ENCODE measurements at regions of chr2 and their contacts with region 1.

Region 1: GRCh38 chr2:26001743-26002351 is 19.6 kb upstream of the KIF3C start:
- DNase-seq: peak in 1 of 2 donors; percentile 85
- H3K4me3 ChIP-seq: peak overlapping the region in 1 of 2 donors; percentile 13
- H3K27ac ChIP-seq: peak overlapping the region; percentile 72 to 78
- H3K4me1 ChIP-seq: peaks cover 21 to 35% of the 10 kb centered on the region in 2 donors
- H3K27me3 ChIP-seq: no peaks in the 10 kb centered on the region
- CTCF ChIP-seq: no peak

Region 2: GRCh38 chr2:25960920-25961319 is 40.9 kb before region 1 on chr2:
- intact Hi-C with region 1: no loop called
- DNase-seq: no peak
- H3K4me3 ChIP-seq: no peak overlapping the region
- H3K27ac ChIP-seq: no peak overlapping the region
- H3K4me1 ChIP-seq: no peaks in the 10 kb centered on the region
- H3K27me3 ChIP-seq: no peaks in the 10 kb centered on the region
- CTCF ChIP-seq: no peak

Region 3: DNA sequence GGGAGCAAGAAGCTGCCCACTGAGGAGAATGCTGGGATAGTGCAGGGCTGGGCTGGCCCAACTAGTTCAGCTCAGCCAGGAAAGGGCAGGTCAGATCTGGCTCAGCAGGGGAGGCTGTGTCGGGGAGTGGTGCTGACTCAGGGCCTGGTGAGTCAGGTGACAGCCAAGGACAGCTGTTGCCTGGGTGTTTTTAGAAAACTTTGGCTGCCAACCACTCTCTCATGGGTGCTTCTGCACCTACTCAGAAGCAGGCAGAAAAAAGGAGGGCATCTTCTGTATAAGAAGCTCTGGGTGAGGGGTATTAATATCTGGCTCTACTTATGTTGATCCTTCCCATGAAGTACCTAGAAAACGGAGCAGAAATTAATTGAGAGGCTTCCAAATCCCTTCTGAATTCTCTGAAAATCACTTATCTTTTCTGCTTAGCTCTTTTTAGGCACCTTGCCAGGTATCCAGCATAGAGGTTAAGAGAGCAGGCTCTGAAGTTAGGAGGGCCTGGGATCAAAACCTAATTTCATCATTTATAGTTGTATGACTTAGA is 16.4 kb after region 1 on chr2:
- intact Hi-C with region 1: loop called (anchors 2 kb)
- DNase-seq: peak; percentile 70 to 86
- H3K4me3 ChIP-seq: no peak overlapping the region
- H3K27ac ChIP-seq: peak overlapping the region; percentile 13 to 56
- H3K4me1 ChIP-seq: peaks cover 0 to 11% of the 10 kb centered on the region in 2 donors
- H3K27me3 ChIP-seq: no peaks in the 10 kb centered on the region
- CTCF ChIP-seq: no peak

Region 4: GRCh38 chr2:26255759-26256384 is 254.0 kb after region 1 on chr2:
- intact Hi-C with region 1: no loop called
- DNase-seq: no peak
- H3K4me3 ChIP-seq: no peak overlapping the region
- H3K27ac ChIP-seq: no peak overlapping the region
- H3K4me1 ChIP-seq: no peaks in the 10 kb centered on the region
- H3K27me3 ChIP-seq: no peaks in the 10 kb centered on the region
- CTCF ChIP-seq: no peak

Measured in ascending aorta (tissue), 2 donors.